HAP-1 (cell line): ENCODE measurements at regions of chr22 and their contacts with region 1.

Region 1: DNA sequence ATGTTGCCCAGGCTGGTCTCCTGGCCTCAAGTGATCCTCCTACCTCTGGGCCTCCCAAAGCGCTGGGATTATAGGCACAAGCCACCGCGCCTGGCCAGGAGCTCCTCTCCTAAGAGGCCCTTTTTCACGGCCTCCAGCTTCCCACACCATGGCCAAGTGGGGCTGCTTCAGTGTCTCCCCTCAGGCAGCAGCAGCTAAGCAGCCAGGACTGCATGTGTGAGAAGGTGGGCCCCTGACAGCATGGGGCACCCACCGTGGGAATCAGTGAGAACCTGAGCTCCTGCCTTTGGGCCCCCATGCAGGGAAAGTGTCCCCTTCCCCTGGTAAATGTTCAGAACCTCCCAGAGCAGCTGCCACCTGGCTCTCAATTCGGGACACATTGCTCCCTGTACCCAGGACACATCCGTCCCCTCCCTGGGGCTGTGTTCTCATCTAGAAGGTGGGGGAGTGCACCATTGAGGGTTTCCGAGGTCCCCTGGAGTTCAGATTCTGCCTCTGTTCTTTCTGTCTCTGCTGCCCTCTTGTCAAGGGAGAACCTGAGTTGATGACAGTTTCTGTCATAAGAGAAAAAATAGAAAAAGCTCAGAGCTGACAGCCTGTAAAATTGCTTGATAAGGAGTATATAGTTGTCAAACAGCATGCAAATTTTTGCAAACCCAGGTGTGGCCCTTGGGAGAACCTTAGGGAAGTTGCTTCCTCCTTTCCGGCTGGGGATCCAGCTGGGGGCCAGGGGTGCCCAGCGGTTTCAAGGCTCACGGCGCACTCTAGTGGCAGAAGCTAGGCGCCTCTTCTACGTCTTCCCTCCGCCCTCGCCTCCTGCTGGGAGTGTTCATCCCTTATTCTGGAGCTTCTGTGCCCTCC is 29.7 kb downstream of the FAM83F start:
- DNase-seq: peak; percentile 73 to 86
- H3K4me3 ChIP-seq: no peak overlapping the region
- H3K4me1 ChIP-seq: no peaks in the 10 kb centered on the region
- H3K27me3 ChIP-seq: no peaks in the 10 kb centered on the region

Region 2: DNA sequence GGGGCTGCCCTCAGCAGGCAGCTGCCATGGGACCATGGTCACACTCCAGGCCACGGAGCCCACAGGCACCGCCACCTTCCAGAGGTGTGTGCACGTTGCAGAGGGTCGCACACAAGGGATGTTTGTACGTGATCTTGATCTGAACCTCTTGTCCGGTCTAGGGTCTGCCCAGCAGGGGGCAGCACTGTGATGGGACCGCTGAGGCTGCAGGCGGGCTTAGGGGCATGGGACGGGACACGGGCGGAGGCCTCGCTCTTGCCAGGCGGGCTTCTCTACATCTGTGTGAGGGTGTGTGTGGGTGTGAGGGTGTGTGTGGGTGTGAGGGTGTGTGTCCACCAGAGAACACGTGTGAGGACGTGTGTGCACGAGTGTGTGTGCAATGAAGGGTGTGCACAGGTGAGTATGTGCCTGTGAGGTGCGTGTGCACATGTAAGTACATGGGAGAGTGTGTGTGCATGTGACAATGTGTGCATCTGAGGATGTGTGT is 401.5 kb before region 1 on chr22:
- in situ Hi-C with region 1: loop called (anchors 10 kb)
- DNase-seq: peak; percentile 41 to 89
- H3K4me3 ChIP-seq: no peak overlapping the region
- H3K4me1 ChIP-seq: peaks cover 4% of the 10 kb centered on the region
- H3K27me3 ChIP-seq: no peaks in the 10 kb centered on the region